A549 (cell line): ENCODE measurements at regions of chr20 and their contacts with region 1.

Region 1: DNA sequence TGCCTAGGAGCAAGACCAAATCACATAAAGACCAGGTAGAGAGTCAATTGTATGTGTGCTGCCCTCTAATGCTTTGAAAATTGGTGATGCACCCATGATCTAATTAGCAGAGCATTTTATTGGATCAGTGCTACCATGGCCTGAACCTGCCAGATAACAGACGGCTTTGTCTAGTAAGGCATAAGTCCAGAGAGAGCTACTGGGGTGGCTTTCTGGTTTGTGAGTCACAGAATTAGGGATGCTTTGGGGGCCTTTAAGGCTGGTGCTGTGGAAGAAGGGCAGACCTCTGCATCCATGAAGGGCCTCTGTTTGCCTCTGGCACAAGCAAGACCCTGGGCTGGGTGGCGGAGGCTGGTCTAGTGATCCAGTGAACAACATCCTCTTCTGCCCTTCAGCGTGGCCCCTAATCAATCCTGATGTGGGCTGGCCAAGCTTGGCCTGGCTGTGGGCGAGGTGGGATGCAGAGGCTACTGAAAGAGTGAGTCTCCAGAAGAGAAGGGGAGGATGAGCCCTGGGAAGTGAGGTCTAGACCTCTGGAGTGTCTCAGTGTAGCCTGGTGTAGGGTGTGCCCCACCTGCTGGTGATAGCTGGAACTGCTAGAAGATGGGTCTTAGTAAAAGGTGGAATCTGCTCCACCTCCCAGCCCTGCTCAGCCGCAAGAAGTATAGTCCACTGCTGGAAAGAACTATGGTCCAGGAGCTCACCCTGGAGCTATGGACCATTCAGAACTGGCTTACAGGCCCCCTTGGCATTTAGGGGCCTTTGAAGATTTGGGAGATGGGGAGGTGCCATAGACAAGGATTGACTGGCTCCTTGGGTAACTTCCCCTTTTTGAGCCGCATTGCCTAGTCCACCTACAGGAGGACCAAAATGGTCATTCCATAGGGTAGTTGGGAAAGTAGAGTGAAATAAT is 36.7 kb upstream of the AAR2 start:
- DNase-seq: peak; percentile 80 to 91
- ATAC-seq: peak; percentile 89 to 94
- H3K4me3 ChIP-seq: no peak overlapping the region
- H3K27ac ChIP-seq: peak overlapping the region in 1 of 2 experiments; percentile 34; a peak in 1 of 6 replicates
- H3K4me1 ChIP-seq: no peaks in the 10 kb centered on the region
- CTCF ChIP-seq: peak; percentile 81
- EP300 ChIP-seq: no peak
- POLR2A ChIP-seq: no peak
- RAD21 ChIP-seq: peak; percentile 84 to 88

Region 2: GRCh38 chr20:36050436-36051317 is 148.9 kb before region 1 on chr20:
- CTCF ChIA-PET with region 1: no interaction called
- POLR2A ChIA-PET with region 1: no interaction called
- DNase-seq: peak; percentile 91 to 95
- ATAC-seq: peak; percentile 98 to 99
- H3K4me3 ChIP-seq: peak overlapping the region; percentile 98
- H3K27ac ChIP-seq: peak overlapping the region; percentile 98 to 99
- H3K4me1 ChIP-seq: peaks cover 29% of the 10 kb centered on the region
- CTCF ChIP-seq: no peak; the same call in 2 of the 3 replicates
- EP300 ChIP-seq: peak in 1 of 2 experiments; percentile 18; a peak in 1 of 5 replicates
- POLR2A ChIP-seq: peak; percentile 93
- RAD21 ChIP-seq: peak in 1 of 2 experiments; percentile 32; a peak in 1 of 5 replicates

Region 3: DNA sequence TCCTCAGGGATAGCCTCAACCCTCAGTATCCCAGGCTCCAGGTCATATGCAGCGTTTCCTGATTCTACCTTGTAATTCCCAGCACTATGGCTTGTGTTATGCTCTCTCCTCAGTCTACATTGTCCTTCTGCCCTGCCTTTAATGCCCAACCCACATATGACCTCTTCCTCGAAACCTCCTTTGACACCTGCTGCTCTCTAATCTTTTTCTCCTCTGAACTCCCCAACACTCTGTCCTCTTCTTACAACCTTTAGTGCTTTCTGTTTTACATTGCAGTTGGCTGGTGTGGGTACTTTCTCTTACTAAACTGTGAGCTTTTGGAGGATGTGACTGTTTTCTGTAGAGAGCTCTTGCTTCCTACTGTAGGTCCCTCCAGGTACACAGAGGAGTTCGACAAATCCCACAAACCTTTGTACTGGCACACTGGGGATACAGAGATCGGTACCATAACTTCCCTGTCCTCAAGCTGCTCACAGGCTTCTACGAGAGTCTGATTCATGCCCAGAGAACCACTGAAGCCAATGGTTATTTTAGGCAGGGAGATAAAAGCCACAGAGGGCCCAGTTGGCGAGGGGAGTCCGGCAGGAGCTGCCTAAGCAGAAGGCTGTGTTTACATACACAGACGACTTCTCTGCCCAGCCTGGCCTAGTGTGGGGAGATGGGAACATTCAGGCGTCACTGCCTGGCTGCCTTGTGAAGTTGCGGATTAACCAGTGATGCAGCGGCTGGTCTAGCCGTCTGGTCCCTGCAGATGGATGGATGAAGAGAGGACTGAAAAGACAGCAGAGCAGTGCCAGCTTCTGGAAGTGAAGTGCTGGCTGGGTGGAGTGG is 53.5 kb before region 1 on chr20:
- CTCF ChIA-PET with region 1: interaction called, 22 read pairs
- POLR2A ChIA-PET with region 1: no interaction called
- DNase-seq: no peak
- ATAC-seq: no peak
- H3K4me3 ChIP-seq: no peak overlapping the region
- H3K27ac ChIP-seq: no peak overlapping the region
- H3K4me1 ChIP-seq: peaks cover 35% of the 10 kb centered on the region
- CTCF ChIP-seq: no peak
- EP300 ChIP-seq: no peak
- POLR2A ChIP-seq: no peak
- RAD21 ChIP-seq: no peak

Region 4: DNA sequence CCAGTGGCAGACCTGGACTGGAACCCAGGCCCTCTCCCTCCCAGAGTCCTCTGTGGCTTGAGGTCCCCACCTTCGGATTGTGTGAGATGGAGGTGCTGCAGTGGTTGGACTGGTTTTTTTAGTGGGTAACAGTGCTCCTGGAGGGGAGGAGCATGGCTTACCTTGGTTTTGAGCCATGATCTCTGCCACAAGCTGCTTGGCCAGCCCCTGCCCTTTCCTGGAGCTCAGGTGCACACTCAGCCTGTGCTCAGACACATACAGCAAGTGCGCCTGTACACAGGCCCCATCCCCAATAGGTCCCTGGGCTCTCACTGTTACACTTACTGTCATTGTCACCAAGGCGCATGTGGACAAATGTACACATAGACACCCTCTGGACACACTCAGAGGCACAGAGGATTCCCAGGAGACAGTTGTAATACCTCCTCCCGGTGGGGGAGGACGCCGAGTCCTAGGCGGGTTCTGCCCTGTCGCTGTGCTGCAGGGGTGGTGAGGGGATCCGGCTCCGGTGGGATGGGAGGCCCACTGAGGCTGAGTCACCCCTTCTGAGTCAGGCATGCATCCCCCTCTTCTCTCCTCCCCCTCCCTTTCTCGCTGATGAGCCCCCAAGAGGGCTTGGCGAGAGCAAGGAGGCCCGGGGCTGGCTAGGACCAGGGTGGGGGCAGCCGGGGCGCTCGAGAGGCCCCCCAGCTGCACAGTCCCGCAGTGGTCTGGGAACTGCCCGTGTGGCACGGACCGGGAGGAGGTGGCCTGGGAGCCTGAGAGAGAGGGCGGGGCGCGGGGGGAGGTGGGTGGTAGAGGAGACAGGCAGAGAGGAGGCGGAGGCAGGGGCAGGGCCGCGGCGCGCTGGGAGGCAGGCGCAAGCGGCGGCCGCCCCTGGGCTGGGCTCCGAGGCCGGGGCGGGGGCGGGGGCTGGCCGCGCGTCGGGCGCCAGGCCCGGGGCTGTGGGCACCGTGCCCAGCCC is 45.6 kb before region 1 on chr20:
- CTCF ChIA-PET with region 1: interaction called, 395 read pairs
- POLR2A ChIA-PET with region 1: no interaction called
- DNase-seq: peak; percentile 60 to 72
- ATAC-seq: peak; percentile 83 to 89
- H3K4me3 ChIP-seq: peak overlapping the region; percentile 80
- H3K27ac ChIP-seq: peak overlapping the region; percentile 87 to 94
- H3K4me1 ChIP-seq: peaks cover 64% of the 10 kb centered on the region
- CTCF ChIP-seq: no peak
- EP300 ChIP-seq: no peak
- POLR2A ChIP-seq: no peak
- RAD21 ChIP-seq: no peak

Region 5: DNA sequence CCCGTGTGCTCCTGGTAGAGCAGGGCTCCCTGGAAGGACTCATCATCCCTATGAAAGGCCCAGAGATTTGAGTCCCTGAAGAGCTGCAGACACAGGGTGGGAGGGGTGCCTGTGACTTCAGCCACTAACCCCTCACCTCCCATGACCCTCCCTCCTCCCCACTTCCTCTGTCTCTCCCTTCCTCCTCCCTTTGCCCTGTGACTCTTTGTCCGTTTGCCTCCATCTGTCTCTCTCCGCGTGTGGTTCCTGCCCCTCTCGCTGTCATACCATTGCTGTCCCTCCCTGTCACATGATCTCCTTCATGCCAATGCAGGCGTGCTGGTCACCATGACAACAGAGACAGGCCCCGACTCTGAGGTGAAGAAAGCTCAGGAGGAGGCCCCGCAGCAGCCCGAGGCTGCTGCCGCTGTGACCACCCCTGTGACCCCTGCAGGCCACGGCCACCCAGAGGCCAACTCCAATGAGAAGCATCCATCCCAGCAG is 26.1 kb before region 1 on chr20:
- CTCF ChIA-PET with region 1: interaction called, 395 read pairs
- POLR2A ChIA-PET with region 1: no interaction called
- DNase-seq: no peak
- ATAC-seq: no peak
- H3K4me3 ChIP-seq: no peak overlapping the region
- H3K27ac ChIP-seq: no peak overlapping the region
- H3K4me1 ChIP-seq: peaks cover 25% of the 10 kb centered on the region
- CTCF ChIP-seq: no peak
- EP300 ChIP-seq: no peak
- POLR2A ChIP-seq: no peak
- RAD21 ChIP-seq: no peak

Region 6: GRCh38 chr20:36181934-36182603 is 17.5 kb before region 1 on chr20:
- CTCF ChIA-PET with region 1: interaction called, 49 read pairs
- POLR2A ChIA-PET with region 1: no interaction called
- DNase-seq: no peak
- ATAC-seq: no peak
- H3K4me3 ChIP-seq: no peak overlapping the region
- H3K27ac ChIP-seq: no peak overlapping the region
- H3K4me1 ChIP-seq: no peaks in the 10 kb centered on the region
- CTCF ChIP-seq: no peak
- EP300 ChIP-seq: no peak
- POLR2A ChIP-seq: no peak
- RAD21 ChIP-seq: no peak

Region 7: DNA sequence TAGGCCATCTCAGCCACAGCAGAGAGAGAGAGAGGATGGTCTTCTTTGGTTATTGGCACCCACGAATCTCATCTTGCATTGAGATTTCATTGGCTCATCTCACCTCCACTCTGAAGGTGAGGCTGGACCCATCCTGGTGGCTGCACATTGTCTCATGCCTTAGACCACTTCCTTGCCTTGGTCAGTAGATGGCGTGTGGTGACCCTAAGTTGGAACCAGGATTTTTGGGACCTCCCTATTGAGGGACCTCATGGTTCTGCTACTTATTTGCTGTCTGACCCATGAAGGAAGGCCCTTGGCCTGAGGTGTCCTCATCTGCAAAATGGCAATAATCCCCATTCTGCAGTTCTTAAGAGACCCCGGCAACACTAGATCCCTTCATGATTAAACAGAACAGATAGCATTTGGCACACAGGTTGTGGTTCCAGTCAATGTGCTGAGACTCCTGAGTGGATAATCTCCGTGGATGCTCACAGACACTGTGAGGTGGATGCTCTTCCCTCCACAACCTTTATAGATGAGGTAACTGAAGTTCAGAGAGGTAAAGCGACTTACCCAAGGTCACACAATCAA is 15.2 kb after region 1 on chr20:
- CTCF ChIA-PET with region 1: interaction called, 58 read pairs
- POLR2A ChIA-PET with region 1: no interaction called
- DNase-seq: peak; percentile 46 to 54
- ATAC-seq: peak; percentile 48 to 74; a peak in 3 of 6 replicates
- H3K4me3 ChIP-seq: no peak overlapping the region
- H3K27ac ChIP-seq: no peak overlapping the region
- H3K4me1 ChIP-seq: no peaks in the 10 kb centered on the region
- CTCF ChIP-seq: peak; percentile 56
- EP300 ChIP-seq: no peak
- POLR2A ChIP-seq: no peak
- RAD21 ChIP-seq: peak; percentile 55 to 67

Region 8: GRCh38 chr20:36238760-36239159 is 39.2 kb after region 1 on chr20:
- CTCF ChIA-PET with region 1: interaction called, 10 read pairs
- POLR2A ChIA-PET with region 1: no interaction called
- DNase-seq: no peak
- ATAC-seq: no peak
- H3K4me3 ChIP-seq: no peak overlapping the region
- H3K27ac ChIP-seq: no peak overlapping the region
- H3K4me1 ChIP-seq: peaks cover 24% of the 10 kb centered on the region
- CTCF ChIP-seq: no peak
- EP300 ChIP-seq: no peak
- POLR2A ChIP-seq: no peak
- RAD21 ChIP-seq: no peak

Region 9: DNA sequence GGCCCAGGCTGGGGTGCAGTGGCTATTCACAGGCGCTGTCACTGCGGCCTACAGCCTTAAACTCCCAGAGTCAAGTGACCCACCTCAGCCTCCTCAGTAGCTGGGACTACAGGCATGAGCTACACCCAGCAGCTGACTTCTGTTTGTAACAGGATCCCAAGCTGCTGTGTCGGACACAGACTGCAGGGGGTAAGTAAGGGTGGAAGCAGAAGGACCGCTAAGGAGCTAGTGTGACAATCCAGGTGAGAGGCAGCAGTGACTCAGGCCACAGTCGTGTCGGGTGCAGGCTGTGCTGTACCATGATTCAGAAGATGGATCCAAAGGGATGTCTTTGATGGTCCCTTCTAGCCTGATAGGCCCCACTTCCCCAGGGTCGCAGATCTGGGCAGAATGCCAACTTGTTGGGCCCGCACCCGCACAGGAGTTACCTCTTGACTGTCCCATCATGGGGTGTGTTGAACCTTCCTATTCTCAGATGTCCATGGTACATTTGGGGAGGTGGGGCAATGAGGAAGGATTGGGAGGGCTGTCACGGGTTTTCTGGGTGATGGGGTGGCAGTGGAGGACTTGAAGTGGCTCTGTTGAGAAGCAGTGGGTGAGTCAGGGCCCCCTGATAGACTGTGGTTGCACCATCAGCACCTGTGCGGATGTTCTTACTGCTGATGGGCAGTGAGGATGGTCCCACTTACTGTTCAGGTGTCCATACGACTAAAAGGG is 61.9 kb after region 1 on chr20:
- CTCF ChIA-PET with region 1: no interaction called
- POLR2A ChIA-PET with region 1: no interaction called
- DNase-seq: no peak
- ATAC-seq: peak; percentile 13 to 21; a peak in 2 of 6 replicates
- H3K4me3 ChIP-seq: no peak overlapping the region
- H3K27ac ChIP-seq: no peak overlapping the region
- H3K4me1 ChIP-seq: no peaks in the 10 kb centered on the region
- CTCF ChIP-seq: no peak
- EP300 ChIP-seq: no peak
- POLR2A ChIP-seq: no peak
- RAD21 ChIP-seq: no peak